ENCODE measurements at regions of chr14 and their contacts with region 1.

Region 1: GRCh38 chr14:34554540-34555333 is 15.2 kb upstream of the EAPP start:
- DNase-seq: peak in 1 of 5 donors; percentile 5
- H3K4me3 ChIP-seq: no peak overlapping the region
- H3K4me3 Mint-ChIP-seq: peak overlapping the region; percentile 27 to 77 (median 66)
- H3K27ac ChIP-seq: no peak overlapping the region
- H3K27ac Mint-ChIP-seq: peak overlapping the region in 7 of 8 donors; percentile 31 to 88 (median 79)
- H3K4me1 ChIP-seq: no peaks in the 10 kb centered on the region
- H3K4me1 Mint-ChIP-seq: peaks cover 16 to 23% (median 16%) of the 10 kb centered on the region in 3 donors
- H3K27me3 ChIP-seq: no peaks in the 10 kb centered on the region
- H3K27me3 Mint-ChIP-seq: no peaks in the 10 kb centered on the region

Region 2: GRCh38 chr14:34536951-34537676 is 17.6 kb before region 1 on chr14:
- CTCF ChIA-PET with region 1: interaction called, 3 read pairs
- POLR2A ChIA-PET with region 1: interaction called, 17 read pairs
- DNase-seq: no peak
- H3K4me3 ChIP-seq: no peak overlapping the region
- H3K4me3 Mint-ChIP-seq: peak overlapping the region in 5 of 7 donors; percentile 20 to 44 (median 40)
- H3K27ac ChIP-seq: no peak overlapping the region
- H3K27ac Mint-ChIP-seq: peak overlapping the region in 6 of 8 donors; percentile 23 to 72 (median 54)
- H3K4me1 ChIP-seq: peaks cover 26% of the 10 kb centered on the region
- H3K4me1 Mint-ChIP-seq: peaks cover 35 to 51% (median 47%) of the 10 kb centered on the region in 3 donors
- H3K27me3 ChIP-seq: no peaks in the 10 kb centered on the region
- H3K27me3 Mint-ChIP-seq: no peaks in the 10 kb centered on the region

Region 3: DNA sequence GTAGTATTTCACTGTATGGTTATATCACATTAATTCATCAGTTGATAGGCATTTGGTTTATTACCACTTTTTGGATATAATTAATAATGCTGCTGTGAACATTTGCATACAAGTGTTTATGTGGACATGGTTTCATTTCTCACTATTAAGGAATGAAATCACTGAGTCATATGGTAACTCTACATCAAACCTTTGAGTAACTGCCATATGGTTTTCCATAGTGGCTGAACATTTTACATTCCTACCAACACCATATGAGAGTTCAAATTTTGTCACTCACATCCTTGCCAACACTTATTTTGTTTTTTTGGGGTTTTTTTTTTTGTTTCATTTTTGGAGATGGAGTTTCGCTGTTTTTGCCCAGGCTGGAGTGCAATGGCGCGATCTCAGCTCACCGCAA is 15.0 kb after region 1 on chr14:
- CTCF ChIA-PET with region 1: no interaction called
- POLR2A ChIA-PET with region 1: no interaction called
- DNase-seq: no peak
- H3K4me3 ChIP-seq: no peak overlapping the region
- H3K4me3 Mint-ChIP-seq: no peak overlapping the region
- H3K27ac ChIP-seq: no peak overlapping the region
- H3K27ac Mint-ChIP-seq: no peak overlapping the region
- H3K4me1 ChIP-seq: no peaks in the 10 kb centered on the region
- H3K4me1 Mint-ChIP-seq: no peaks in the 10 kb centered on the region
- H3K27me3 ChIP-seq: no peaks in the 10 kb centered on the region
- H3K27me3 Mint-ChIP-seq: no peaks in the 10 kb centered on the region

Region 4: DNA sequence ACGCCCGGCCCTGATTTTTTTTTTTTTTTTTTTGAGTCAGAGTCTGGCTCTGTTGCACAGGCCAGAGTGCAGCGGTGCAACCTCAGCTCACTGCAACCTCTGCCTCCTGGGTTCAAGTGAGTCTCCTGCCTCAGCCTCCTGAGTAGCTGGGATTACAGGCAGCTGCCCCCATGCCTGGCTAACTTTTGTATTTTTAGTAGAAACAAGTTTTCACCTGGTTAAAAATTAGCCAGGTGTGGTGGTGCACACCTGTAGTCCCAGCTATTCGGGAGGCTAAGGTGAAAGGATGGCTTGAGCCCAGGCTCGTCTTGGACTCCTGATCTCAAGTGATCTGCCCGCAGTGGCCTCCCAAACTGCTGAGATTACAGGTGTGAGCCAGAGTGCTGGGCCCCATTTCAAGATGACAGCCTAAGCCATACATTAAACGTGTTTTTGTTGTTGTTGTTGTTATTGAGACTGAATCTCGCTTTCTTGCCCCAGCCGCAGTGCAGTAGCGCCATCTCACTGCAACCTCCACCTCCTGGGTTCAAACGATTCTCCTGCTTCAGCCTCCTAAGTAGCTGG is 27.5 kb after region 1 on chr14:
- CTCF ChIA-PET with region 1: no interaction called
- POLR2A ChIA-PET with region 1: no interaction called
- DNase-seq: no peak
- H3K4me3 ChIP-seq: no peak overlapping the region
- H3K4me3 Mint-ChIP-seq: no peak overlapping the region
- H3K27ac ChIP-seq: no peak overlapping the region
- H3K27ac Mint-ChIP-seq: no peak overlapping the region
- H3K4me1 ChIP-seq: no peaks in the 10 kb centered on the region
- H3K4me1 Mint-ChIP-seq: peaks cover 0 to 8% (median 0%) of the 10 kb centered on the region in 3 donors
- H3K27me3 ChIP-seq: no peaks in the 10 kb centered on the region
- H3K27me3 Mint-ChIP-seq: no peaks in the 10 kb centered on the region

Region 5: DNA sequence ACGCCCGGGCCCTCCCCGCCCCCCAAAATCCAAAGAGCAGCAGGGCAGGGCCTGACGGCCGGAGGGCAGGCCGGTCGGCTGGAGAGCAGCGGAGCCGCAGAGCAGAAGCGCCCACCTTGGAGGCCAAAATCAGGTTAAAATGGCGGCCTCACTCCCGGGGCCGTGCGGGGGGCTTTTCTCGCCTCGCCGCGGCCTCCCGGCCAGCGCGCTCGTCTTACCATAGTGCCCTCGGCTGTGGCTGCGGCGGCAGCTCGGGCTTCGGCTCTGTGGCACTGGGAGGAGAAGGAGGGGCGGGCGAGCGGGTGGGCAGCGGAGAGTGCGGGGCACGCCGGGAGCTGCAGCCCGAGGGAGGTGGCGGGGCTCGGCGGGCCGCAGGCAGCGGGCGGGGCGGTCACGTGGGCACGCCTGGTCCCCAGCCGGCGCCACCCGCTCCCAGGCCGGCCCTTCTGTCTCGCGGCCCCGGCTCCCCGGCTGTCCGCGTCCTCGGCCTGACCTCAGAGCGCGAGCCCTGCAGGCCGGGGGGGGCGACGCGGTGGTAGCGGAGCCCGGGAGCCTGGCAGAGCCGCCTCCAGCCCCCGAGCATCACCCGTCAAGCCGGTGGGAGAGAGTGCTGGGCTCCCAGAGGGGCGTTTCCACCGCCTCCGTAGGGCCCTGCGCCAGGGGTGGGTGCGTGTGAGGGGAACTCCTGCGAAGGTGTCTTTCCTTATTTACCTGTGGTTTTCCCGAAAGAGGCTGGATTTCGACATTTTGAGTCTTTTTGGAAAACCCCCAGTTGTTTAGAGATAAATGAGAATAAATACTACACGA is 159.8 kb after region 1 on chr14 and contains the start of gene CFL2:
- CTCF ChIA-PET with region 1: no interaction called
- POLR2A ChIA-PET with region 1: no interaction called
- DNase-seq: peak; percentile 66 to 81 (median 74)
- H3K4me3 ChIP-seq: peak within 1 kb of the TSS; percentile 58
- H3K4me3 Mint-ChIP-seq: peak within 1 kb of the TSS; percentile 92 to 97 (median 94)
- H3K27ac ChIP-seq: peak within 1 kb of the TSS; percentile 55
- H3K27ac Mint-ChIP-seq: peak within 1 kb of the TSS; percentile 89 to 97 (median 94)
- H3K4me1 ChIP-seq: peaks cover 6% of the 10 kb centered on the region
- H3K4me1 Mint-ChIP-seq: peaks cover 25 to 35% (median 30%) of the 10 kb centered on the region in 3 donors
- H3K27me3 ChIP-seq: no peaks in the 10 kb centered on the region
- H3K27me3 Mint-ChIP-seq: no peaks in the 10 kb centered on the region
- total RNA-seq, gene CFL2: 8.4 to 10.0 TPM

Region 6: DNA sequence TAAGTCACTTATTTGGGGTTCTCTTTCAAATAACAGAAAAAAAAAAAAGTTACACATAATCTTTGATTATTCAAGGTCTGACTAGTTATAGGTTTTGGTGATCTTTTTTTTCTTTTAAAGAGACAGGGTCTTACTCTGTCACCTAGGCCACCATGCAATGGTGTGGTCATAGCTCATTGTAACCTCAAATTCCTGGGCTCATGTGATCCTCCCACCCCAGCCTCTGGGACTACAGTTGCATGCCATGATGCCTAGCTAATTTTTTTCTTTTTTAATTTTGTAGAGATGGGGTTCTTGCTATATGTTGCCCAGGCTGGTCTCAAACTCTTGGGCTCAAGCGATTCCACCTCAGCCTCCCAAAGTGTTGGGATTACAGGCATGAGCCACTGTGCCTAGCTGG is 216.2 kb after region 1 on chr14:
- CTCF ChIA-PET with region 1: no interaction called
- POLR2A ChIA-PET with region 1: no interaction called
- DNase-seq: no peak
- H3K4me3 ChIP-seq: no peak overlapping the region
- H3K4me3 Mint-ChIP-seq: no peak overlapping the region
- H3K27ac ChIP-seq: no peak overlapping the region
- H3K27ac Mint-ChIP-seq: no peak overlapping the region
- H3K4me1 ChIP-seq: no peaks in the 10 kb centered on the region
- H3K4me1 Mint-ChIP-seq: peaks cover 6 to 20% (median 6%) of the 10 kb centered on the region in 3 donors
- H3K27me3 ChIP-seq: no peaks in the 10 kb centered on the region
- H3K27me3 Mint-ChIP-seq: no peaks in the 10 kb centered on the region